Activated CD8-positive, alpha-beta T cell treated with anti-CD3 and anti-CD28 coated beads, Interleukin-2, amount 10 ng/mL, durations not matched to agents 7 days and 5 days (primary cell): ENCODE measurements at regions of chr16 and their contacts with region 1.

Region 1: GRCh38 chr16:86072328-86073102 is 173.6 kb downstream of the IRF8 start:
- DNase-seq: peak; percentile 59
- ATAC-seq: no peak
- H3K4me3 Mint-ChIP-seq: no peak overlapping the region
- H3K27ac Mint-ChIP-seq: peak overlapping the region; percentile 12
- H3K4me1 Mint-ChIP-seq: no peaks in the 10 kb centered on the region
- H3K27me3 Mint-ChIP-seq: peaks cover 7% of the 10 kb centered on the region

Region 2: GRCh38 chr16:86016201-86016871 is 56.2 kb before region 1 on chr16:
- CTCF ChIA-PET with region 1: no interaction called
- POLR2A ChIA-PET with region 1: no interaction called
- DNase-seq: peak; percentile 50
- ATAC-seq: no peak
- H3K4me3 Mint-ChIP-seq: no peak overlapping the region
- H3K27ac Mint-ChIP-seq: no peak overlapping the region
- H3K4me1 Mint-ChIP-seq: peaks cover 16% of the 10 kb centered on the region
- H3K27me3 Mint-ChIP-seq: peaks cover 30% of the 10 kb centered on the region

Region 3: DNA sequence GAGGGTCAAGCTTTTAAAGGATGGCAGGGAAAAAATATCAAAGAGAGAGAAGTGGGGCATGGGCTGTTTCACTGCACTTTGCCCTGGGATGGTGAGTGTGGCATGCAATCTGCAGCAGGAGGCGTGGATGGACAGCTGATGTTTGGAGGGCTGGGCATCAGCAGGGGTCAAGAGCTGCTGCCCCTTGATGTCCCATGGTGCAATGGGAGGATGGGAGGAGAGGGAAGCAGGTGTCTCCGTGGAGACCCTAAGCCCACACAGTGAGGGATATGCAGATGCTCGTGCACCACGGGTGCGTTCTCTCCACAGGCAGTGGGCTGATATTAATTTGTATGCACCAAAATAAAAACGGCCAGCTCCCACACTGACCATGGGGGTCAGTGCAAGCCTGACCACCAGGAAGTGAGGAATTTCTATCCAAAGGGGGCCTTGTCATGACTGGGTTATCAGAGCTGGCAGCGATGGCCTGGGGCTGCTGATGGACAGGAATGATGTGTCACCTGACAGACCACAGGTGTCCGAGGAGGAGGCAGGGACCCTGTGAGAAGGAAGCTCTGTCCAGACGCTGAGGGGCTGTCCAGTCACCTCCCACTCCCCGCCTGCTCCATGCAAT is 10.0 kb after region 1 on chr16:
- CTCF ChIA-PET with region 1: no interaction called
- POLR2A ChIA-PET with region 1: no interaction called
- DNase-seq: no peak
- ATAC-seq: no peak
- H3K4me3 Mint-ChIP-seq: no peak overlapping the region
- H3K27ac Mint-ChIP-seq: no peak overlapping the region
- H3K4me1 Mint-ChIP-seq: peaks cover 11% of the 10 kb centered on the region
- H3K27me3 Mint-ChIP-seq: peaks cover 6% of the 10 kb centered on the region

Region 4: DNA sequence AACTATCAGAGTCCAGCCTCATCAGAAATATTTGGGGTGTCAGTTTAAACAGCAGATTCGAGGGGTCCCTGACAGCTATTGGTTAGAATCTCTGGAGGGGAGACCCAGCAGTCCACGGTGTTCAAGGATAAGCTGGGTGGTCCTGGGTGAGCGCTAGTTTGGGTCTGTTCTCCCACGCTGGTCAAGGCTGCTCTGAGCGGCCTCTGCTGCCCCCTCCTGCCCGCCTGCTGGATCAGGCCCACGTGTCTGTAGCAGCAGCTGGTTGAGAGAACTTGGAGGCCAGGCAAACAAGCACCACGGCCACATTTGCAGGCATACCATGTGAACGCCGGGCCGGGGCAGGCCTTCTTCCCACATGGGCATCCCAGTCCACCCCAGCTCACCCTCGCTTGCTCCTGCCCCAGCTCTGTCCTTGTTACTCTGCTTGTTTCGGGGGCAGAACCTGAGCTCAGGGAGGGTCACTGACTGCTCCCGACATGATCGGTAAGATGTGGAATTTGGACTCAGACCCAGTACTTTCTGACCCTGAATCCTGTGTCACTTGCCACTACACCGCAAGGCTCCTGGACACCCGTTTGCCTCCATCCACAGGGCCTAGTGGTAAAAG is 445.2 kb after region 1 on chr16:
- CTCF ChIA-PET with region 1: interaction called, 11 read pairs
- POLR2A ChIA-PET with region 1: no interaction called
- DNase-seq: peak; percentile 52
- ATAC-seq: no peak
- H3K4me3 Mint-ChIP-seq: no peak overlapping the region
- H3K27ac Mint-ChIP-seq: no peak overlapping the region
- H3K4me1 Mint-ChIP-seq: peaks cover 2% of the 10 kb centered on the region
- H3K27me3 Mint-ChIP-seq: peaks cover 58% of the 10 kb centered on the region